A549 (cell line): ENCODE measurements at regions of chr6 and their contacts with region 1.

Region 1: DNA sequence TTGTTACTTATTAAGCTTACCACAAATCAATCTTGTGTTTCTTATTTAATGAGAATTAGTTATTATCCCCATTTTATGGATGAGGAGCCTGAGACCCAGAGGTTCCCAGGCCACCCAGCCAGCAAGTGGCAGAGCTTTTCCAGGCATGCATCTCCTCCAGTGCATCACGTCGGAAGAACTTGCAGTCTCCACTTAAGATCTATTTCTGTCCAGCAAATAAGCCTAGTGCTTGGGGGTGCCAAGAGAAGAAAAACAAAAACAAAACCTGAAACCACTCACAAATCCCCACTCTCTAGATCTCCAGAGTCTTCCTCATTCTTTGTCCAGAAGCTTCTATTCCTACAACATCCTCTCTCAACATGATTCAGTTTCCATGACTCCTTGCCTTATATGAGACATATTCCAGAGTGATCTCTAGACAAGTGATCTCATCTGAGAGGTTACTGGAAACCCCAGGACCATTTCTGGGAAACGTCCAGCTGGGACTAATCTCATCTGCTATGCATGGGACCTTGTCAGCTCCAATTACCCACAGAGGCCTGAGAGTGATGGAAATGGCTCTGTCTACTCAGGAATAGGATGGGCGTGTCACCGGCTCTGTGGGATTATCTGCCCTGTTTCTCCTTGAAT is 4.1 kb downstream of the GUCA1B start:
- DNase-seq: no peak
- ATAC-seq: no peak
- H3K4me3 ChIP-seq: no peak overlapping the region
- H3K27ac ChIP-seq: no peak overlapping the region
- H3K4me1 ChIP-seq: peaks cover 19% of the 10 kb centered on the region
- CTCF ChIP-seq: no peak
- EP300 ChIP-seq: no peak
- POLR2A ChIP-seq: no peak
- RAD21 ChIP-seq: no peak

Region 2: DNA sequence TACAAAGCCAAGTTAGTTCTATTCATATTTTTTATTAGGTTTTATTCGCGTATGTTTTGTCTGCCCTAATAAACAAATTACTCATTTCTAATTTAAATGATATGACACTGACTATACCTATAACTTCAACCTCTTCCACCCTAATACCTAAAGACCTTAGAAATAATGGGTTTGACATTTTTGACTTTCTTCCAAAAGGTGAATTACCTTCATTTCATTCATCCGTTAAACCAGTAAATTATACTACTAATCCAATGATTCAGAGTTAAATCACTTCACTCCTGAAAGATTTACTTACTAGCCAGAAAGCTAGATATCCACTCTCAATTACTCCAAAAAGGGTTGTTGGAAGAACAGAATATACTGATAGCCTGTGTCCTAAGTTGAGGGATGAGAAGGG is 21.8 kb after region 1 on chr6:
- CTCF ChIA-PET with region 1: interaction called, 21 read pairs
- POLR2A ChIA-PET with region 1: no interaction called
- DNase-seq: no peak
- ATAC-seq: no peak
- H3K4me3 ChIP-seq: no peak overlapping the region
- H3K27ac ChIP-seq: no peak overlapping the region
- H3K4me1 ChIP-seq: peaks cover 32% of the 10 kb centered on the region; the same call in 2 of the 3 replicates
- CTCF ChIP-seq: no peak
- EP300 ChIP-seq: no peak
- POLR2A ChIP-seq: no peak
- RAD21 ChIP-seq: no peak